ENCODE measurements at regions of chr1 and their contacts with region 1.

Region 1: GRCh38 chr1:206734499-206735142 is 36.0 kb upstream of the IL19 start:
- DNase-seq: peak; percentile 71 to 91 (median 82)
- ATAC-seq: peak; percentile 68
- H3K4me3 ChIP-seq: no peak overlapping the region
- H3K4me3 Mint-ChIP-seq: peak overlapping the region; percentile 6
- H3K27ac ChIP-seq: peak overlapping the region; percentile 19 to 37
- H3K27ac Mint-ChIP-seq: peak overlapping the region; percentile 90
- H3K4me1 ChIP-seq: peaks cover 57% of the 10 kb centered on the region
- H3K4me1 Mint-ChIP-seq: peaks cover 55% of the 10 kb centered on the region
- H3K27me3 ChIP-seq: no peaks in the 10 kb centered on the region
- H3K27me3 Mint-ChIP-seq: no peaks in the 10 kb centered on the region
- CTCF ChIP-seq: peak; percentile 95

Region 2: DNA sequence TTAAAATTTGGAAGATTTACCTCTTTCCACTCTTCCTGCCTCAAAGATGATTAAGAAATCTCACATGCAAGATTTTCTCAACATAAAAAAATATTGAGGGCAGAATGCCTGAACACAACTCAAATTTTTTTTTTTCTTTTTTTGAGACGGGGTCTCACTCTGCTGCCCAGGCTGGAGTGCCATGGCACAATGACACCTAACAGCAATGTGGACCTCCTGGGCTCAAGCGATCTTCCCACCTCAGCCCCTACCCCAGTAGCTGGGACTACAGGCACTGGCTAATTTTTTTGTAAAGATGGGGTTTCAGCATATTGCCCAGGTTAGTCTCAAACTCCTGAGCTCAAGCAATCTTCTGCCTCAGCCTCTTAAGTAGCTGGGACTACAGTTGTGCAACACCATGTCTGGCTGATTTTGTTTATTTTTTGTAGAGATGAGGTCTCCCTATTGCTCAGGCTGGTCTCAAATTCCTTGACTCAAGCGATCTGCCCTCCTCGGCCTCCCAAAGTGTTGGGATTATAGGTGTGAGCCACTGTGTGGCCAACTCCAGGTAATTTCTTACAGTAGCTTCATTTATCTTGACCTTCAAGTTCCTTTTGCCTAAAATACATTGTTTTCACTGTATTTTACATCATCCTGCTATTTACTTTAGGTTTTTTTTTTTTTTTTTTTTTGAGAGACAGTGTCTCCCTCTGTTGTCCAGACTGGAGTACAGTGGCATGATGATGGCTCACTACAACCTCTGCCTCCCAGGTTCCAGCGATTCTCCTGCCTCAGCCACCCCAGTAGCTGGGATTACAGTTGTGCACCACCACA is 995.1 kb before region 1 on chr1:
- CTCF ChIA-PET with region 1: no interaction called
- POLR2A ChIA-PET with region 1: no interaction called
- intact Hi-C with region 1: no loop called
- DNase-seq: no peak
- ATAC-seq: no peak
- H3K4me3 ChIP-seq: no peak overlapping the region
- H3K4me3 Mint-ChIP-seq: no peak overlapping the region
- H3K27ac ChIP-seq: no peak overlapping the region
- H3K27ac Mint-ChIP-seq: no peak overlapping the region
- H3K4me1 ChIP-seq: no peaks in the 10 kb centered on the region
- H3K4me1 Mint-ChIP-seq: peaks cover 56% of the 10 kb centered on the region
- H3K27me3 ChIP-seq: no peaks in the 10 kb centered on the region
- H3K27me3 Mint-ChIP-seq: no peaks in the 10 kb centered on the region
- CTCF ChIP-seq: no peak

Region 3: DNA sequence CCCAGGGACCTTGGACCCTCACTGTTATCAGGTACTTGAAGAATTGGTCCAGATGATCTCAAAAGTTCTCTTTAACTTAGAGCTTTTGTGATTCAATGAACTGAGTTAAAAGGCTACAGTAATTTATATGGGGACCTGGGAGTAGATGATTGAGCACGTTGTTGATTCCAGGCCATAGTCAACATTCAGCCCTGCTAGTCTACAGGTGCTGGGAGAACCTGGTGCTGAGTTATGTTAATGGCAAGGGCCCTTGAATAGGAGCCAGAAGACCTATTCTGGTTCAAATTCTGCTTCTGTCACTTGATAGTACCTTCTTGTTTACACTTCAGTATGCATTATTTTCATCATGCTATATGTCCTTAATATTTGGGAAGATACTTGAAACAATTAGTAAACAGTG is 88.1 kb before region 1 on chr1:
- CTCF ChIA-PET with region 1: no interaction called
- POLR2A ChIA-PET with region 1: no interaction called
- intact Hi-C with region 1: no loop called
- DNase-seq: no peak
- ATAC-seq: no peak
- H3K4me3 ChIP-seq: no peak overlapping the region
- H3K4me3 Mint-ChIP-seq: no peak overlapping the region
- H3K27ac ChIP-seq: no peak overlapping the region
- H3K27ac Mint-ChIP-seq: no peak overlapping the region
- H3K4me1 ChIP-seq: no peaks in the 10 kb centered on the region
- H3K4me1 Mint-ChIP-seq: no peaks in the 10 kb centered on the region
- H3K27me3 ChIP-seq: no peaks in the 10 kb centered on the region
- H3K27me3 Mint-ChIP-seq: no peaks in the 10 kb centered on the region
- CTCF ChIP-seq: no peak

Region 4: GRCh38 chr1:206744683-206745082 is 10.1 kb after region 1 on chr1:
- CTCF ChIA-PET with region 1: interaction called, 14 read pairs
- POLR2A ChIA-PET with region 1: interaction called, 3 read pairs
- intact Hi-C with region 1: no loop called
- DNase-seq: peak in 2 of 14 experiments; percentile 35 to 56
- ATAC-seq: no peak
- H3K4me3 ChIP-seq: no peak overlapping the region
- H3K4me3 Mint-ChIP-seq: no peak overlapping the region
- H3K27ac ChIP-seq: no peak overlapping the region
- H3K27ac Mint-ChIP-seq: peak overlapping the region; percentile 5
- H3K4me1 ChIP-seq: peaks cover 22% of the 10 kb centered on the region
- H3K4me1 Mint-ChIP-seq: peaks cover 62% of the 10 kb centered on the region
- H3K27me3 ChIP-seq: no peaks in the 10 kb centered on the region
- H3K27me3 Mint-ChIP-seq: no peaks in the 10 kb centered on the region
- CTCF ChIP-seq: no peak

Region 5: GRCh38 chr1:206766251-206766856 is 31.7 kb after region 1 on chr1:
- CTCF ChIA-PET with region 1: interaction called, 57 read pairs
- POLR2A ChIA-PET with region 1: interaction called, 17 read pairs
- intact Hi-C with region 1: loop called (anchors 2 to 5 kb)
- DNase-seq: peak; percentile 48 to 90 (median 66)
- ATAC-seq: peak; percentile 84
- H3K4me3 ChIP-seq: no peak overlapping the region
- H3K4me3 Mint-ChIP-seq: peak overlapping the region; percentile 84
- H3K27ac ChIP-seq: no peak overlapping the region
- H3K27ac Mint-ChIP-seq: peak overlapping the region; percentile 88
- H3K4me1 ChIP-seq: peaks cover 64% of the 10 kb centered on the region
- H3K4me1 Mint-ChIP-seq: peaks cover 74% of the 10 kb centered on the region
- H3K27me3 ChIP-seq: no peaks in the 10 kb centered on the region
- H3K27me3 Mint-ChIP-seq: no peaks in the 10 kb centered on the region
- CTCF ChIP-seq: no peak

Region 6: DNA sequence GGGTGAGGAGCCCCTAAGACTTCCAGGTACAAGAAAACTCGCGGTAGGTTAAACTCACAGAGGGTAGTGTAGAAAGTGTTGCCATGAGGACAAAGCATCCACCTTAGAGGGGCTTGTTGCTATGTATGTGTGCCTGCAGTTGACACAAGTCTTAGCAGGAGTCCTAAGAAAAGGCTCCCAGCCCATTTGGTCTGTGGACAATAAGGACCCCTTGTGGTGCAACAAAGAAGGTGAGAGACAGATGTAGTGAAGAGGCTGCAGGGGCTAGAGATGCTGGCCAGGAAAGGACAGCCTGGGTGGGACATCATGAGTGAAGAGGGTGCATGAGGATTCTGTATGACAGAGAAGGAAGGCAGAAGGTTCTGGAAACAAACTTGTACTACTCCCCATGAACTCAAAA is 74.0 kb after region 1 on chr1:
- CTCF ChIA-PET with region 1: interaction called, 139 read pairs
- POLR2A ChIA-PET with region 1: interaction called, 91 read pairs
- intact Hi-C with region 1: loop called (anchors 1 kb)
- DNase-seq: peak in 13 of 14 experiments; percentile 15 to 82 (median 41)
- ATAC-seq: peak; percentile 85
- H3K4me3 ChIP-seq: no peak overlapping the region
- H3K4me3 Mint-ChIP-seq: no peak overlapping the region
- H3K27ac ChIP-seq: no peak overlapping the region
- H3K27ac Mint-ChIP-seq: peak overlapping the region; percentile 28
- H3K4me1 ChIP-seq: peaks cover 34% of the 10 kb centered on the region
- H3K4me1 Mint-ChIP-seq: peaks cover 50% of the 10 kb centered on the region
- H3K27me3 ChIP-seq: no peaks in the 10 kb centered on the region
- H3K27me3 Mint-ChIP-seq: no peaks in the 10 kb centered on the region
- CTCF ChIP-seq: peak; percentile 40

Region 7: GRCh38 chr1:206925106-206925736 is 190.6 kb after region 1 on chr1:
- CTCF ChIA-PET with region 1: interaction called, 5 read pairs
- POLR2A ChIA-PET with region 1: interaction called, 28 read pairs
- intact Hi-C with region 1: loop called in 1 of 2 experiments (anchors 5 kb)
- DNase-seq: peak in 9 of 14 experiments; percentile 41 to 85 (median 56)
- ATAC-seq: no peak
- H3K4me3 ChIP-seq: no peak overlapping the region
- H3K4me3 Mint-ChIP-seq: no peak overlapping the region
- H3K27ac ChIP-seq: peak overlapping the region; percentile 57 to 95
- H3K27ac Mint-ChIP-seq: no peak overlapping the region
- H3K4me1 ChIP-seq: peaks cover 56% of the 10 kb centered on the region
- H3K4me1 Mint-ChIP-seq: peaks cover 40% of the 10 kb centered on the region
- H3K27me3 ChIP-seq: no peaks in the 10 kb centered on the region
- H3K27me3 Mint-ChIP-seq: no peaks in the 10 kb centered on the region
- CTCF ChIP-seq: no peak

Region 8: DNA sequence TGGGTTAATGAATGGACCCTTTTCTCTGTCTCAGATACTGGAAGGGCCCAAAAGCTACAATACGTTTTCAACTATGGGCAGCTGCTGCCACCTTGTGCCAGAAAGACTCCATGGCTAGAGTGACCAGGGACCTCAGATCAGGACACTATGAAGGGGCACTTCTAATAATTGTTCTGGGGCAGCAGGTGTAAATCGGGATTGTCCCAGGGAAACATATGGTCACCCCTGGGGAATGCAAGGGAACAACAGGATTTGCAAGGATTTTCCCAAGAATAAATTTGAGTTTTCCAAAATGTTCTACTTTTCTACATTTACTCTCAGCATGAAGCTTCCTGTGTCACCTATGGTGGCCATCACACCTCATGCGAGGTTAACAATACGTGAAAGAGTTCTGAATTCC is 247.6 kb after region 1 on chr1:
- CTCF ChIA-PET with region 1: interaction called, 12 read pairs
- POLR2A ChIA-PET with region 1: interaction called, 6 read pairs
- intact Hi-C with region 1: loop called (anchors 2 kb)
- DNase-seq: peak; percentile 48 to 77 (median 59)
- ATAC-seq: peak; percentile 81
- H3K4me3 ChIP-seq: no peak overlapping the region
- H3K4me3 Mint-ChIP-seq: no peak overlapping the region
- H3K27ac ChIP-seq: no peak overlapping the region
- H3K27ac Mint-ChIP-seq: no peak overlapping the region
- H3K4me1 ChIP-seq: no peaks in the 10 kb centered on the region
- H3K4me1 Mint-ChIP-seq: no peaks in the 10 kb centered on the region
- H3K27me3 ChIP-seq: peaks cover 6 to 12% of the 10 kb centered on the region in 2 experiments
- H3K27me3 Mint-ChIP-seq: peaks cover 18% of the 10 kb centered on the region
- CTCF ChIP-seq: peak; percentile 88

Measured in CD4-positive, alpha-beta T cell (primary cell).